ENCODE measurements at regions of chr6 and their contacts with region 1.

Region 1: DNA sequence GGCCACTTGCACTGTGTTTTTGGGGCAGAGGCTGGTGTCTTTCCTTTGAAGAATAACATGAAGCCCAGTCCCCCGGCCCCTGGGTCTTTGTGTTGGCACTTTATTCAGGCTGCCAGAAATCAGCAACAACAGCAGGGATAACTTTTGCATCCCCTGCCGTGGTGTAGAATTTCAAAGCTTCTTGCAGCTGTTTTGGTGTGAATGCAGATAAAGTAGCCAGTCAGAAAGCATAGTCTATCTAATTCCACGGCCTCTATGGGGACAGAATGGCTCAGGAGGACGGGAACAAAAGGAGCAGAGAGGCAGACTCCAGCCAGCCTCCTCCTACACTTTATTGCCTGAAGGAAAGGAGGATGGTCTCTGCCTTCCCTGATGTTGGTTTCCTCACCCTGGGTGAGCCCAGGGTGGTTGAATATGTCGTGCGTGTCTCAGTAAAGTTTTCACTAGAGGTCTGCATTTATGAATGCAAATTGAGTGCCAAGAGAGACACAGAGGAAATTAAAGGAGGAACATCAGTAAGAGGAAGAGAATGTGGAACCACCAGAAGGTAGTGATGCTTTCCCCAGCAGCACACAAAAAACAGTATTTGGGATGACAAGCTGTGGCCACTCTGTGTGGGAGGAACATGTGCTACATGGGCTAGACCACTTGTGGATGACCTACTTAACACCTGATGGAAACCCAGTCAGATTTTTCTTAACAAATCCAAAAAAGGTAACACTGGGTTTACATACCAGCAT is 125.9 kb upstream of the TRAF3IP2 start:
- DNase-seq: no peak

Region 2: GRCh38 chr6:111692327-111693164 is 39.1 kb before region 1 on chr6:
- intact Hi-C with region 1: no loop called
- DNase-seq: no peak

Region 3: GRCh38 chr6:111759836-111760785 is 28.5 kb after region 1 on chr6:
- intact Hi-C with region 1: loop called in 1 of 2 experiments (anchors 1 kb)
- DNase-seq: no peak

Region 4: DNA sequence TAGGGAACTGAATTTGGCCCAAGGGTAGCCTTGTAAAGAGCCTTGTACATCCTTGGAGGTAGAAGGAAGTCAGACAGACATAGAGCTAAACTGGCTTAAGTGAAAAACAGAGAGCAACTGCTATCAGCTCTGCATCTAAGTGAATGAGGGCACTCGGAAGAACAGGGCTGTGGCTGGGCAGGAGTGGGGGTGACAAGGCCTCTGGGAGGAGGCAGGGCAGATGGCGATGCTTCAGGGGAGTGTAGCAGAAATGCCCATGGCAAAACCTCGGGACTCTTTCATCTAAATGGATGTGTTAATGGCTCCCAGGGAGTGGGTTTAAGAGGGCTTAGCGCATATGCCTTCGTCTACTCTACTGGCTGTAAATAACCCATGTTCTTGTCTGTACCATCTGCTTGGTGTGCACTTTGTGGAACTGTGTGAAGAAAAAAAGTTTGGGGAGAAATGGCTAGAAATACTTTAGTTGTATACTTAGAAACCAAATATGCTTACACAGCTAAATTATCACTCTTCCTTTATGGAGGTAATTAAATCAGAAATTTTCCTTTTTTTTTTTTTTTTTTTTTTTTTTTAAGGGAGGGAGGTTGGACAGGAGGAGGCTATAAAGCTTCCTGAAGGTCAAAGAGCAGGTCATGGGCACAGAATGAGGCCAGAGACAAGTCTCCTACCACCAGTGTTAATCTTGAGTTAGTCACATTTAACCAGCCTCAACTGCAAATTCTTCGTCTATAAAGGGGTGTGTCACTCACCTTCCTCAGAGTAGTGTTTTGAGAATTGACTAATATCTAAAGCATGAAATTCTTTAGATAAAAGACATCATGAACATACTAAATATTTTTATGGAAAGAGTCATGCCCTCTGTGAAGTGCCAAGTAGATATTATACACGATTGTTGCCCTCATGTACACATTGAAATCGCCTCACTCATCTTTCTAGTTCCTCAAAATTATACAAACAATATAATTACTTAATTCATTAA is 80.7 kb after region 1 on chr6:
- intact Hi-C with region 1: no loop called
- DNase-seq: no peak

Measured in posterior vena cava (tissue), 2 donors.